ENCODE measurements at regions of chr1 and their contacts with region 1.

Region 1: GRCh38 chr1:225652729-225653462 is at the start of gene ENAH:
- DNase-seq: peak; percentile 65 to 98 (median 78)

Region 2: GRCh38 chr1:225474986-225475820 is 177.7 kb before region 1 on chr1:
- intact Hi-C with region 1: loop called (anchors 1 kb)
- DNase-seq: peak in 9 of 10 donors; percentile 52 to 95 (median 63)

Region 3: DNA sequence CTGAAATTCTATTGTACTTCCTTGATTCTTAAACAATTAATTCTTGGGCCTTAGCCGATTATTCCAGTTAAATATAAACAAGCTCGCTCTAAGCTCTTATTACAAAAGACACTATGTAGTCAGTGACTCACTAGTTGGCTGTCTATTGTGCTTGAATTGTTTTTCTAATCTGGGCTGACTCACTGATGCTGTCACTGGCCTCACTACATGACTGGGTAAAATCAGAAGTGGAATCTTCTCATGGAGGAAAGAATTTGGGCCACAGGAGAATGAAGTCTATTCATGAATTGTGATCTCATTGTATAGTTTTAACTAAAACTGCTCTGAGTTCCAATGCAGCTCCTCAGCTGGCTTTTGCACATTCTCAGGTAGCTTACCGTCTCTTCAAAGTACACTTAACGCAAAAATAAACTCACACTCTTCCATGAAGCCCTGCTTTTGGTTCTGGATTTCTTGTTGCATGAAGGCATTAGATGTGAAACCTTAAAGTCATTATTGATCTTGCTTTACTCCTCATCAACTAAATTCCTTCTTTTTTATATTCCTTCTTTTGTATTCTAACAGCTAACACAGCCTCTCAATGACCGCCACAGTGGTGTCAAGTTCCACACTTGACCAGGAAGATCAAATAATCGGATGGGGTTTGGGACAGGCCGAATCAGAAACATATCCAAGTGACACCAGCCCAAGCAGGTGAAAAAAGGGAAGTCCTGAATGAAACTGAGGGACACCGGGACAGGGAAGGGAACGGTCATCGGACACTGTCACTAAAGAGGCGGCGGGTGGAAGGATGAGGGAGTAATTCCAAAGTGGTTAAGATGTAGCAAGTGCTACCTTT is 144.1 kb before region 1 on chr1:
- intact Hi-C with region 1: no loop called
- DNase-seq: no peak

Region 4: DNA sequence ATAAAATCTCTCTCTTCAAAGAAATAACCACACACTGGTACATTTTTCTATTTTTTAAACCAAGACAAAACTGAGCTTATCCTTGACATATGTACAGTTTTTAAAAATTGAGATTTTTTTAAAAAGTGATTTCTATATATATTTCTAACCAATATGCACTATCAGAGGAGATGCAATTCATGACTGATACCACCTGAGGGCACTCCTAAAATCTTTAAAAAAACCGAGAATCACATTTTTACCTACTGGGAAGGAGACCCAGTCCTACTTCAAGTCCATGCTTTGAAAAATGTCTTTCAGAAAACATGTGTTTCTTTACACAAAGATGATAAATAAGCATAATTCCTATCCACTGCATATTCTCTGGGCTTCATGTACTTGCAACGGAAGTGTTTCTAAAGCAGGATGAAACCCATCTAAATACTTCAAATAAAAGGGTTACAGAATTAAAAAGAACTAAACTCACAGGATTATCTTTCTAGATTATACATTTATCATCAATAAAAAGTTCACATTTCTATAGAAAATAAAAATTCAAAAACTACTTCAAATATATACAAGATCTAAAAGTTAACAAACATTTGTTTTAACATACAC is 98.6 kb before region 1 on chr1:
- intact Hi-C with region 1: loop called (anchors 5 kb)
- DNase-seq: no peak

Region 5: DNA sequence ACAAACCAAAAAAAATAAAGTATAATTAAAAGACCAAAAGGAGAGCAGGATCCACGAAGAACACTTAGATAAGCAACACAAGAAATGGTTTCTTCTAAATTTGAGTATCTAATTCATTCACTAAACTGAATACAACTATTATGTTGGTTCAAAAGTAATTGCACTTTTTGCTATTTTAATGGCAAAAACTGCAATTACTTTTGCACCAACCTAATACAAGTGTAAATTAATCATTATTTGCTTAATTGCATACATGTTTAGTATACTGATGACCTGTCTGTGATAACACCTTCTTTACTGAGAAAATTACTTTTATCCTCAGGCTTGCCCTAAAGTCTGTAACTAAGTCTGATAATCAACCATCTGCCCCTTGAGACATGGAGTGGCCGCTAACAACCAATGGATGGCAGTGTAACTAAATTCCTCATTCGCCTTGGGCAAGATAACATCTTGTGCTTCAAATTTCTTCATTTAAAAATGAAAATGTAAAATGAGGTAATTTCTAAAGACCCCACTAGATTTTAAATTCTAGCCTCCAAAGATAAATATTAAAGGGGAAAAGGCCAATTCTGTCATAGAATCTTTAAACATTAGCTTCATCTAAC is 85.2 kb before region 1 on chr1:
- intact Hi-C with region 1: loop called (anchors 5 kb)
- DNase-seq: no peak

Region 6: GRCh38 chr1:225777583-225778336 is 124.9 kb after region 1 on chr1 and contains the start of gene SRP9:
- intact Hi-C with region 1: loop called (anchors 2 kb)
- DNase-seq: peak; percentile 97 to 100 (median 98)

Region 7: GRCh38 chr1:225923692-225924555 is 271.0 kb after region 1 on chr1 and contains the start of gene PYCR2:
- intact Hi-C with region 1: loop called (anchors 5 kb)
- DNase-seq: peak; percentile 91 to 99 (median 94)